ENCODE measurements at regions of chr2 and their contacts with region 1.

Region 1: GRCh38 chr2:14445670-14446069 is 186.8 kb upstream of the LRATD1 start:
- DNase-seq: no peak
- ATAC-seq: no peak
- H3K4me3 ChIP-seq: no peak overlapping the region
- H3K27ac ChIP-seq: no peak overlapping the region
- H3K4me1 ChIP-seq: no peaks in the 10 kb centered on the region
- H3K27me3 ChIP-seq: no peaks in the 10 kb centered on the region
- CTCF ChIP-seq: no peak
- POLR2A ChIP-seq: no peak
- RAD21 ChIP-seq: no peak

Region 2: DNA sequence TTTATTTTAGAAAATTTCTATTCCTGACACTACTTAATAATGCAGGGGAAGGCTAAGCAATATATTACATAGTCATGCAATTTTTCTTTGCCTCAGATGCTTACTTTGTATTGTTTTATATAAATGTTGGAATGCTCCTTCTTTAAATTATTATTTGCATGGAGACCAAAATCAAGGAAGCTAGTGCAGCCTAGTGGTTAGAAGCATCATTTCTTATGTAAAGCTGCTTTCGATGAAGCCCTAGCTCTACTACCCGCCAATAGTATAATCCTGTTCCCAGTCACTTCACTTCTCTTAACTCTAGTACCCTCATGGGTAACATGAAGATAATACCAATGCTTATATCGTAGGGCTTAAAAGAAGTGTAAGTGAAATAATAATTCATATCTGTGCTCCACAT is 385.8 kb after region 1 on chr2:
- CTCF ChIA-PET with region 1: no interaction called
- POLR2A ChIA-PET with region 1: no interaction called
- dilution Hi-C with region 1: no loop called
- in situ Hi-C with region 1: no loop called
- intact Hi-C with region 1: loop called (anchors 10 kb)
- DNase-seq: no peak
- ATAC-seq: no peak
- H3K4me3 ChIP-seq: no peak overlapping the region
- H3K27ac ChIP-seq: no peak overlapping the region
- H3K4me1 ChIP-seq: no peaks in the 10 kb centered on the region
- H3K27me3 ChIP-seq: no peaks in the 10 kb centered on the region
- CTCF ChIP-seq: no peak
- POLR2A ChIP-seq: no peak
- RAD21 ChIP-seq: peak; percentile 18; the same call in 1 of the 2 replicates

Measured in IMR-90 (cell line).